ENCODE measurements at regions of chr14 and their contacts with region 1.

Region 1: GRCh38 chr14:105562713-105563346 is 36.4 kb downstream of the TMEM121 start:
- DNase-seq: no peak
- H3K4me3 ChIP-seq: no peak overlapping the region
- H3K4me3 Mint-ChIP-seq: no peak overlapping the region
- H3K27ac ChIP-seq: no peak overlapping the region
- H3K27ac Mint-ChIP-seq: peak overlapping the region in 1 of 7 donors; percentile 76
- H3K4me1 ChIP-seq: no peaks in the 10 kb centered on the region
- H3K4me1 Mint-ChIP-seq: no peaks in the 10 kb centered on the region
- H3K27me3 ChIP-seq: no peaks in the 10 kb centered on the region
- H3K27me3 Mint-ChIP-seq: peaks cover 0 to 2% (median 1%) of the 10 kb centered on the region in 3 donors
- CTCF ChIP-seq: no peak

Region 2: DNA sequence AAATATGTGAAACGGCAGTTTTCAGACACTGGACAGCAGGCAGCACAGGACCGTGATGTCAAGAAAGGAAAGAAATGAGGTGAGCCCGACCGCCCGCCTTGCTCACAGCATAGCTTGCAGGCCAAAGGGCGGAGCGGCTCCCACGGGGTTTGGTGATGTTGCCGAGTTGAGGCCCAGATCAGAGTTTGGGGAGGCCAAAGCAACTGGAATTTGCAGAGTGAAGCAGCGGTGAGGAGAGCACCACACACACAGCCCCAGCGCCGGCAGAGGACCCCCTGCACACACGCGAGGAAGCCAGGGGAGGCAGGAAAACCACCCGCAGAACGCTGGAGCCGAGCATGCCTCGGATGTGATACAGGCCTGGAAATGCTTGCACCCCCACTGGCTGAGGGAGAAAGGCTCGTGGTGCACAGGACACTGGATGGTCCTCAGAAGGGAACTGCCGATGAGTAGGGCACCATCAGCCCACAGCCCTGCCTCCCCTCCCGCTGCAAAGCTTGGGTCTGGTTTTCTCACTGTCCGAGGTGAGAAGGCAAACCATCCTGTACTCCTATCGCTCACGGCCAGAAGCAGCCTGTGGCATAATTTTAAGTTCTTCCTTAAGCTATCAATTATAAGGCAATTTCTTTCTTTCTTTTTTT is 663.8 kb before region 1 on chr14:
- intact Hi-C with region 1: no loop called
- DNase-seq: no peak
- H3K4me3 ChIP-seq: no peak overlapping the region
- H3K4me3 Mint-ChIP-seq: no peak overlapping the region
- H3K27ac ChIP-seq: no peak overlapping the region
- H3K27ac Mint-ChIP-seq: no peak overlapping the region
- H3K4me1 ChIP-seq: no peaks in the 10 kb centered on the region
- H3K4me1 Mint-ChIP-seq: no peaks in the 10 kb centered on the region
- H3K27me3 ChIP-seq: peaks cover 0 to 3% of the 10 kb centered on the region in 2 donors
- H3K27me3 Mint-ChIP-seq: peaks cover 11 to 19% (median 18%) of the 10 kb centered on the region in 3 donors
- CTCF ChIP-seq: no peak

Region 3: DNA sequence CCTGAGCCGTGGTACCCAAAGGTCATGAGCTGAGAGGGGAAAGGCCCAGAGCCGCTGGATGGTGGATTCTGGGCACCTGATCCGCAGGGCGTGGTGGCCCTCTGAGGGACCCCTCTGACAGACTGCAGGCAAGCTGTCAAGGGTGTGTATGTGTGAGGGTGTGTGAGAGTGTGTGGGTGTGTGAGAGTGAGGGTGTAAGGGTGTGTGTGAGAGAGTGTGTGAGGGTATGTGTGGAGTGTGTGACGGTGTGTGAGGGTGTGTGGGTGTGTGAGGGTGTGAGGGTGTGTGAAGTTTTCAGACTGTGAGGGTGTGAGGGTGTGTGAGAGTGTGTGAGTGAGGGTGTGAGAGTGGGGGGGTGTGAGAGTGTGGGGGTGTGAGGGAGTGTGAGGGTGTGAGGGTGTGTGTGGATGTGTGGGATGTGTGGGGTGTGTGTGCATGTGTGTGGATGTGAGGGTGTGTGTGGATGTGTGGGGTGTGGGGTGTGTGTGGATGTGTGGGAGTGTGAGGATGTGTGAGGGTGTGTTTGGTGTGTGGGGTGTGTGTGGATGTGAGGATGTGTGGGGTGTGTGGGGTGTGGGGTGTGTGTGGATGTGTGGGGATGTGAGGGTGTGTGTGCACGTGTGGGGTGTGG is 120.2 kb after region 1 on chr14:
- intact Hi-C with region 1: loop called (anchors 5 to 10 kb)
- DNase-seq: no peak
- H3K4me3 ChIP-seq: no peak overlapping the region
- H3K4me3 Mint-ChIP-seq: no peak overlapping the region
- H3K27ac ChIP-seq: no peak overlapping the region
- H3K27ac Mint-ChIP-seq: peak overlapping the region in 1 of 7 donors; percentile 67
- H3K4me1 ChIP-seq: no peaks in the 10 kb centered on the region
- H3K4me1 Mint-ChIP-seq: peaks cover 3% of the 10 kb centered on the region
- H3K27me3 ChIP-seq: no peaks in the 10 kb centered on the region
- H3K27me3 Mint-ChIP-seq: peaks cover 0 to 7% (median 6%) of the 10 kb centered on the region in 3 donors
- CTCF ChIP-seq: no peak

Measured in CD14-positive monocyte (primary cell).